IMR-90 (cell line): ENCODE measurements at regions of chr13 and their contacts with region 1.

Region 1: GRCh38 chr13:31909864-31910551 is 121.6 kb upstream of the FRY start:
- DNase-seq: peak; percentile 70
- ATAC-seq: peak; percentile 66
- H3K4me3 ChIP-seq: no peak overlapping the region
- H3K27ac ChIP-seq: no peak overlapping the region
- H3K4me1 ChIP-seq: no peaks in the 10 kb centered on the region; the same call in 1 of the 2 replicates
- H3K27me3 ChIP-seq: peaks cover 8% of the 10 kb centered on the region; the same call in 1 of the 2 replicates
- CTCF ChIP-seq: peak; percentile 90
- POLR2A ChIP-seq: no peak
- RAD21 ChIP-seq: peak; percentile 88

Region 2: GRCh38 chr13:31361673-31362072 is 548.3 kb before region 1 on chr13:
- CTCF ChIA-PET with region 1: no interaction called
- POLR2A ChIA-PET with region 1: no interaction called
- dilution Hi-C with region 1: no loop called
- in situ Hi-C with region 1: no loop called
- intact Hi-C with region 1: no loop called
- DNase-seq: no peak
- ATAC-seq: no peak
- H3K4me3 ChIP-seq: no peak overlapping the region
- H3K27ac ChIP-seq: no peak overlapping the region
- H3K4me1 ChIP-seq: no peaks in the 10 kb centered on the region
- H3K27me3 ChIP-seq: no peaks in the 10 kb centered on the region
- CTCF ChIP-seq: no peak
- POLR2A ChIP-seq: no peak
- RAD21 ChIP-seq: no peak

Region 3: DNA sequence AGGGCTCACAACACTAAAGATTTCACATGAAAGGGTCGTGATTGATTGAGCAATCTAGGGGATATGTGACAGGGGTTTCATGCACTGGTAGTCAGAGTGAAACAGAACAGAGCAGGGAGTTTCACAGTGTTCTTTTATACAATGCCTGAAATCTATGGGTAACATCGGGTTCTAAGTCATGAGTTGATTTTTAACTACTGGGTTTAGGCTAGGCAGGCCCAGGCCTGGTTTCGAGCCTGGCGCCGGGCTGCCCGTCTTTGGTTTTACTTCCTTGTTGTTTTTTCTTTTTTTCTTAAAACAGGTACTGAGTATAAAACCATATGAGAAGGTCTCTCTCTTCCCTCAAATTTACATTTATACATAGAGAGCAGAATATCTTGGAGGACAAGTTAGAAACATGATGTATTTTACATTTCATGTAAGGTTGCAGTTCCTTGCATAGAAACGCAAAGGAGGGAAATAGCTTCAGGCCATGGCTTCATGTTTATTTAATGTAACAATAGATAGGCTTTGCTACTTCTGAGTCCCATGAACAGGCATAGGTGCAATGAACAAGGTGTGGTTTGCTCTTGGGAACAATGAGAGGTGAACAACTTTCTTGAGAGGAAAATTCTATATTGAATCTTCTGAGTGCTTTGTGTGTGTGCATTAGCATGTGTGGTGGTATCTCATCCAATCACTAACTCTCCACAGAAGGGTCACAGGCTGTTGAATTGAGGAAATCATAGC is 299.6 kb before region 1 on chr13:
- CTCF ChIA-PET with region 1: no interaction called
- POLR2A ChIA-PET with region 1: no interaction called
- dilution Hi-C with region 1: no loop called
- in situ Hi-C with region 1: no loop called
- intact Hi-C with region 1: no loop called
- DNase-seq: no peak
- ATAC-seq: no peak
- H3K4me3 ChIP-seq: no peak overlapping the region
- H3K27ac ChIP-seq: no peak overlapping the region
- H3K4me1 ChIP-seq: no peaks in the 10 kb centered on the region
- H3K27me3 ChIP-seq: no peaks in the 10 kb centered on the region
- CTCF ChIP-seq: no peak
- POLR2A ChIP-seq: no peak
- RAD21 ChIP-seq: no peak

Region 4: GRCh38 chr13:32019612-32020233 is 109.7 kb after region 1 on chr13:
- CTCF ChIA-PET with region 1: interaction called, 4 read pairs
- POLR2A ChIA-PET with region 1: no interaction called
- dilution Hi-C with region 1: no loop called
- in situ Hi-C with region 1: no loop called
- intact Hi-C with region 1: loop called (anchors 2 kb)
- DNase-seq: peak; percentile 81
- ATAC-seq: peak; percentile 87
- H3K4me3 ChIP-seq: no peak overlapping the region
- H3K27ac ChIP-seq: no peak overlapping the region
- H3K4me1 ChIP-seq: peaks cover 5% of the 10 kb centered on the region; the same call in 1 of the 2 replicates
- H3K27me3 ChIP-seq: peaks cover 1% of the 10 kb centered on the region; the same call in 1 of the 2 replicates
- CTCF ChIP-seq: peak; percentile 84
- POLR2A ChIP-seq: no peak
- RAD21 ChIP-seq: peak; percentile 82

Region 5: DNA sequence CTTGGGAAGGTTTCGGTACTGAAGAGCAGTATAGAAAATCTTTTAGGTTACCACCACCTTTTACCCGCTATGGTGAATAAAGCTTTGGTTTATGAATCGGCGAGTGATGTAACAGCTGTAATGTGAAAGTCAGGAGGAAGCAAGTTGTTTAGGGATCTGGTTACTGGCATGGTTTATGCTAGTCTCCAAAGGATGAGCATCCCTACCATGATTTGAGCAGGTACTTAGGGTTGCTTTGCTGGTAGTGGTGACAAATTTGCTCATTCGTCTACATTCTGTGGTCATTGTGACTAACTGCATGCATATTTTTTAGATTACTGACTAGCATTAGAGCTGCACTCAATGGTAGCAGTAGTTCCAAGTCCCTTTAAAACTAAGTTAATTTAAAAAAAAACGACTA is 225.6 kb after region 1 on chr13:
- CTCF ChIA-PET with region 1: interaction called, 6 read pairs
- POLR2A ChIA-PET with region 1: no interaction called
- dilution Hi-C with region 1: no loop called
- in situ Hi-C with region 1: no loop called
- intact Hi-C with region 1: loop called (anchors 10 kb)
- DNase-seq: peak; percentile 89
- ATAC-seq: peak; percentile 89
- H3K4me3 ChIP-seq: no peak overlapping the region
- H3K27ac ChIP-seq: no peak overlapping the region
- H3K4me1 ChIP-seq: peaks cover 12% of the 10 kb centered on the region
- H3K27me3 ChIP-seq: no peaks in the 10 kb centered on the region
- CTCF ChIP-seq: no peak
- POLR2A ChIP-seq: no peak
- RAD21 ChIP-seq: no peak

Region 6: GRCh38 chr13:32246468-32246867 is 336.5 kb after region 1 on chr13:
- CTCF ChIA-PET with region 1: interaction called, 8 read pairs
- POLR2A ChIA-PET with region 1: no interaction called
- dilution Hi-C with region 1: no loop called
- in situ Hi-C with region 1: no loop called
- intact Hi-C with region 1: loop called (anchors 5 kb)
- DNase-seq: peak; percentile 76
- ATAC-seq: peak; percentile 96
- H3K4me3 ChIP-seq: no peak overlapping the region
- H3K27ac ChIP-seq: no peak overlapping the region
- H3K4me1 ChIP-seq: peaks cover 3% of the 10 kb centered on the region
- H3K27me3 ChIP-seq: no peaks in the 10 kb centered on the region
- CTCF ChIP-seq: peak; percentile 75
- POLR2A ChIP-seq: no peak
- RAD21 ChIP-seq: peak; percentile 75

Region 7: GRCh38 chr13:32581177-32581786 is 671.3 kb after region 1 on chr13:
- CTCF ChIA-PET with region 1: interaction called, 14 read pairs
- POLR2A ChIA-PET with region 1: interaction called, 3 read pairs
- dilution Hi-C with region 1: no loop called
- in situ Hi-C with region 1: loop called (anchors 10 kb)
- intact Hi-C with region 1: loop called (anchors 5 kb)
- DNase-seq: peak; percentile 47
- ATAC-seq: no peak
- H3K4me3 ChIP-seq: no peak overlapping the region
- H3K27ac ChIP-seq: no peak overlapping the region
- H3K4me1 ChIP-seq: 0 out of 2 replicates have a peak, but pooled peaks cover 2% of the 10 kb centered on the region
- H3K27me3 ChIP-seq: no peaks in the 10 kb centered on the region
- CTCF ChIP-seq: peak; percentile 62
- POLR2A ChIP-seq: no peak
- RAD21 ChIP-seq: peak; percentile 55